Mammary epithelial cell (primary cell): ENCODE measurements at regions of chr14 and their contacts with region 1.

Region 1: DNA sequence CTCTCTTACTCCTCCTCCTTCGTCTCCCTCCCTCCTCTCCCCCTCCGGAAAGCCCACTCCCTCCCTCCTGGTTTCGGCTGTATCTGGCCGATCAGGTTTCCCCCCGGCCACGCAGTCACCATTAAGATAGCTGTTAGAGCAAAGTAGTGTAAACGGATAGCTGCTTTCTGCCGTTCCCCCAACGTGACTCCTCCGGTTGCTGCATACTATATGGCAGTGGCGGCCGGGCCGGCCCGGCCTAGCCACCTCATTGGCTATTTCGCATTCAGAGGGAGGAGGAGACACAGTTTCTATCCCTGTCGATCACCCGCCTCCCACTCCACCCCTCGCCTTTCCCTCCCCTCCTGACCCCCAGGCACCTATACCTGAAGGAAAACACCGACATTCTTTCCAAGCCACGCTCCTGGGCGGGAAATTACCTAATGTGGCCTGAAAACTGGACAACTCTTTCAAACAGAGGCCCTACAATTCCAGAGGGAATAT is at the start of gene SIX4:
- DNase-seq: peak; percentile 92
- H3K4me3 ChIP-seq: peak within 1 kb of the TSS; percentile 52 to 92 (median 71)
- H3K27ac ChIP-seq: peak within 1 kb of the TSS; percentile 66
- H3K4me1 ChIP-seq: peaks cover 5% of the 10 kb centered on the region
- H3K27me3 ChIP-seq: no peaks in the 10 kb centered on the region
- CTCF ChIP-seq: no peak
- total RNA-seq, gene SIX4: 10.7 to 13.2 TPM

Region 2: DNA sequence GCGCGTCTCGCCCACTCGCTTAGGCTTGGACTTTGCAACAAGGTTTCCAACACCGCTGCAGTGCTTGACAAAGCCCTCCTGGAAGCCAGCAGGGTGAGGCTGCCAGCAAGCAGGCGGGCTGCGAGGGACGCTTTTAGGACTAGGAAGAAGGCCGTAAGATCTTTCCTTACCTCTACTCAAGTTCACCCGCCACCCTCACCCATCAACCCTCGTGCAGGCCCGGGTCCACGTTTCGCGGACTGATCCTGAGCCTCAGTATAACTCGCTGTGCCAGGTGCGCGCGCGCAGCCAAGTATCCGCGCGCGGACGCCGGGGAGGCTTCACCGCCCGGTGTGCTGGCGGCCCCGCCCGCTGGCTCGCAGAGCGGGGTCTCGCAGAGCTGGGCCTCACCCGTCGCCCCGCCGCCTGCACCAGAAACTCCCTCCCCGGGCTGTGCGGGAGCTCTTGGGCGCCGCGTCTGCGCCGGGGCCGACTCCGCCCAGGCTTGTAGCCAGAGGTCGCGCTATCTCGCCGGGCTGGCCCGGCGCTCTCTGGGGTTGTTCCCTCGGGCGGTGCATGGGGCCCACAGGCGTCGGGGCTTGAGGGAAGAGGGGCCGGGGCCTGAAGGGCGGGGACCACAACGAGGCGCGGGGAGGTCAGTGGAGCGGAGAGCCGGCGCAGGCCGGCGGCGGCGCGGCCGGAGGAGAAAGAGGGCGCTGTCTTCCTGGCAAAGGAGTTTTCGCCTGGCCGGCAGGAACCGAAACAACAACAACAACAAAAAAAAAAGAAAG is 67.3 kb before region 1 on chr14:
- CTCF ChIA-PET with region 1: no interaction called
- dilution Hi-C with region 1: no loop called
- in situ Hi-C with region 1: no loop called
- intact Hi-C with region 1: loop called (anchors 2 kb)
- DNase-seq: peak; percentile 68
- H3K4me3 ChIP-seq: peak overlapping the region; percentile 57 to 76 (median 72)
- H3K27ac ChIP-seq: no peak overlapping the region
- H3K4me1 ChIP-seq: peaks cover 20% of the 10 kb centered on the region
- H3K27me3 ChIP-seq: peaks cover 18% of the 10 kb centered on the region
- CTCF ChIP-seq: peak in 1 of 2 donors; percentile 58

Region 3: DNA sequence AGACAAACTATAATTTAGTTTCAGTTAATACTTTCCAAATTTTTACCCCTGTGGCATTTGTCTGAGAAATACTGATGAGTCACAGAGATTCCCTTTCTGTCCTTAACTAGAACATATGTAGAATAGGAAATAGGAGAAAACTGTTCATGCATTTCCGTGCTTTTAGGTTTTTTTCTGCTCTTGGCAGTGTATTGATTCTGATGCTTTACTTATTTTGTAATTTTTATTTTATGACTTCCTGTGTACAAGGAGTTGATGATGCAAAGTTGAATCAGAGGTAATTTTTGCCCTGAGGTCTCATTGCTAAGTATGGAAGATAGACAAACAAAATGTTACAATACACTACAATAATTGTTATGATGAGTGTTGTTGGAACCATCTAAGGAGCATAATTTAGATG is 33.4 kb after region 1 on chr14:
- CTCF ChIA-PET with region 1: no interaction called
- dilution Hi-C with region 1: no loop called
- in situ Hi-C with region 1: no loop called
- intact Hi-C with region 1: loop called (anchors 1 kb)
- DNase-seq: peak; percentile 82
- H3K4me3 ChIP-seq: peak overlapping the region in 1 of 3 experiments; percentile 19
- H3K27ac ChIP-seq: peak overlapping the region; percentile 84
- H3K4me1 ChIP-seq: peaks cover 49% of the 10 kb centered on the region
- H3K27me3 ChIP-seq: no peaks in the 10 kb centered on the region
- CTCF ChIP-seq: no peak

Region 4: DNA sequence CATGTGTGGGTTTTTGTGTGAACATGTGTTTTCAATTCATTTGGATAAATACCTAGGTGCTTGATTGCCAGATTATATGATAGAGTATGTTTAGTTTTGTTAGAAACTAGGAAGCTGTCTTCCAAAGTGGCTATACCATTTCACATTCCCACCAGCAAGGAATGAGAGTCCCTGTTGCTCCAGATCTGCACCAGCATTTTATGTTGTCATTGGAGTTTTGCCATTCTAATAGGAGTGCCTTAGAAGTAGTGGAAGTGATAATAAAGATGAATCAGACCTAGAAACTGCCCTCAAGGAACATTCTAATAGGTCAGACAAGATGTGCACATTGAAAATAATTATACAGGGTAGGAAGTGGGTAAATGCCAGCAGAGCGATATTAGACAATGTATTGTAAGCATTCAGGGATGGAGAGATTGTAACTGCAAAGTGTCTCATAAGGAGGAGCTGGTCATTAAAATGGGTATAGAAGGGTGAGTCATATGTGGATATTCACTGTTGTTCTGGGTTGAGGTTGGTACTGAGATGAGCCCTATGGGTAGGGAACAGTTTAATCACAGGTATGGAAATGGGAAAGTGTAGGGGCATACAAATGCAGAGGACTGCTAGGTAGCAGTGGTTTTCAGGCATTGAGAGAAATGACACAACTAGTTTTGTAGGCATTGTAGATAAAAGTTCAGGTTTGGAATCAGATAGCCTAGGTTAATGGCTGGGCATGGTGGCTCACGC is 81.8 kb after region 1 on chr14:
- CTCF ChIA-PET with region 1: no interaction called
- dilution Hi-C with region 1: no loop called
- in situ Hi-C with region 1: no loop called
- intact Hi-C with region 1: loop called (anchors 5 kb)
- DNase-seq: peak; percentile 87
- H3K4me3 ChIP-seq: no peak overlapping the region
- H3K27ac ChIP-seq: no peak overlapping the region
- H3K4me1 ChIP-seq: peaks cover 12% of the 10 kb centered on the region
- H3K27me3 ChIP-seq: no peaks in the 10 kb centered on the region
- CTCF ChIP-seq: no peak

Region 5: DNA sequence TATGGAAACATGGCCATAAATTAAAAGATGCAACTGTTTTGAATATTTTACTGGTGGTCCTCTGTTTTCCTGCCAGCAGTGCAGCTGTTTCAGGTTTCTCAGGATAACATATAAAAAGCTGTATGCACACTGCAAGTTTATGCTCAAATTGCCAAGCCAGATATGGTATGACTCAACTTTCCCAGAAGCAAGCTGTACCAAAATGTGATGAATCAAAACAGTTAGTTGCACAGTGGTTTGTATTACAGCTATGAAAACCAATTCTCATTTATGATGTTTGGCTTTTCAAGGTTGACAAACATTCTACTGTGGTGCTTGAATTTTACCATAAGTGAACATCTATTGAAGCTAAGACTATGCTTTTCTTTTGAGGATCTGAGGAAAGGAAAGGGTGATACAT is 241.2 kb after region 1 on chr14:
- CTCF ChIA-PET with region 1: no interaction called
- dilution Hi-C with region 1: no loop called
- in situ Hi-C with region 1: no loop called
- intact Hi-C with region 1: loop called (anchors 5 kb)
- DNase-seq: peak; percentile 55
- H3K4me3 ChIP-seq: no peak overlapping the region
- H3K27ac ChIP-seq: no peak overlapping the region
- H3K4me1 ChIP-seq: peaks cover 15% of the 10 kb centered on the region
- H3K27me3 ChIP-seq: no peaks in the 10 kb centered on the region
- CTCF ChIP-seq: no peak

Region 6: GRCh38 chr14:60980811-60981632 is 256.8 kb after region 1 on chr14 and contains the starts of genes SLC38A6 and TRMT5:
- CTCF ChIA-PET with region 1: no interaction called
- dilution Hi-C with region 1: no loop called
- in situ Hi-C with region 1: no loop called
- intact Hi-C with region 1: loop called (anchors 1 kb)
- DNase-seq: peak; percentile 95
- H3K4me3 ChIP-seq: peak within 1 kb of the TSS; percentile 65 to 97 (median 90)
- H3K27ac ChIP-seq: peak within 1 kb of the TSS; percentile 99
- H3K4me1 ChIP-seq: peaks cover 28% of the 10 kb centered on the region
- H3K27me3 ChIP-seq: no peaks in the 10 kb centered on the region
- CTCF ChIP-seq: no peak
- total RNA-seq, gene SLC38A6: 15.2 to 46.5 TPM
- total RNA-seq, gene TRMT5: 15.3 to 18.6 TPM